GM12878 (cell line): ENCODE measurements at regions of chr6 and their contacts with region 1.

Region 1: DNA sequence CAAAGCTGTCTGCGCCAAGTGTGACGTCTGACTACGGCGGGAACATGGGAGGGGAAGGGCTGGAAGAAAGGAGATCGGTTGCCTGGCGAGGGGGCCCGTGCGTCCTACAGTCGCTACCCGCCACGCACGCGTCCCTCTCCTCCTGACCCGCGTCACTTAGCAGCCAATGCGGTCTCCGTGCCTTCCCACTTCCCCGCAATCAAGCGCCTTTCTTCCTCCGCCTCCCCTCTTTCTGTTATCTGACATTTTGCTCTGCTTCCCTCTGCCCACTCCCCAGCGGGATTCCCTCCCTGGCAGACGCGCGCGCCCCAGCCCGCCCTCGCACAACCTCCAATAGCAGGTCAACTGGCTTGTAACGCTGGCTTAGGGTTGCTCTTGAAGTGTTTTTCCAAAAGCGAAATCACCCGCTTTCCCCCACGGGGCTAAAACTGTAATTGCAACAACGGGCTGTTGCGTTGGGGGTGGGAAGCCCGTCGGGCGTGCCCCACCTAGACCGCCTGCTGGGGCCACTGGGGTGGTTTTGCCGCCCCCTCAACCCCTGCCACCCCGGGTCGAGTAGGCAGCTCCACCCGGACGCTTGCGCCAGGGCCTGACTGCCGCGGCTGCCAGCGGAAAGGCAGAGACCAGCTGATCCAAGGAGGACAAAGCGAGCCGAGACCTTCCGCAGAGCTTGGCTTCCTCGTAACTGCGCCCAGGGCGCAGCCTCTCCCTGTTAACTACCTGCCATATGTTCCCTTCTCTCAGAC is 6.2 kb upstream of the SOX4 start:
- DNase-seq: no peak
- ATAC-seq: peak; percentile 62
- H3K4me3 ChIP-seq: peak overlapping the region; percentile 79
- H3K27ac ChIP-seq: peak overlapping the region; percentile 77
- H3K4me1 ChIP-seq: peaks cover 4% of the 10 kb centered on the region; the same call in 1 of the 2 replicates
- H3K27me3 ChIP-seq: no peaks in the 10 kb centered on the region
- CTCF ChIP-seq: peak; percentile 5 to 30 (median 19); a peak in 2 of 6 replicates
- EP300 ChIP-seq: no peak
- POLR2A ChIP-seq: no peak
- RAD21 ChIP-seq: peak; percentile 45

Region 2: DNA sequence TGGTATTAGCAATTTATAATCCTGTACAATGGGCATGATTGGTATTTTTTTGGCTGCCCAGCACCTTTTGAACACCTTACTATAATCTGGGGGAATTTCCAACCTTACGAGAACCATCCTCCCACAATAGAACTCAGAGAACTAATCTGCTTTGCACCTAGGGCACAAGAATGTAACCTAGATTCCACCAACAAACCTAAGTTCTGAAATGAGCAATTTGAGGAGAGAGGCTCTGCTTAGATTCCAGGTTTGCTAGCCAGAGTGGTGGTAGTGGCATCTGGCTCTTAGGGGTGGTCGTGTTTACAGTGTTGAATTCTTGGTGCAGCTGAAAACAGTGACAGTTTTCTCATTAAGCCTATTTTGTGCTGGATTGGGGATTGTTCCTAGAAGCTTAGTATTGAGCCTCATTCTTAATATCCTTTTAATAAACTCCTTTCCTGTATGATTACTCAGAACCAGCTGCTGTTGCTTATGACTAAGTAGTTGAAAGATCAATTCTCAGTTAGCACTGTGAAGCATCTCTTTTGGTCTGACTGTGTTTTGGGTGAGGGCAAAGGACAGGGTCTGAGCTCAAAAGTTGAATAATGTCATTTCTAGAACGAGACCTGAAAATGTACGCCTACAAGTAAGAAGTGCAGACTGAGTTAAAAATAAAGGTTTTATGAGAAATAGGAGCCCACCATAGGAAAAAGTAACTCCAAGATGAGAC is 667.5 kb before region 1 on chr6:
- CTCF ChIA-PET with region 1: no interaction called
- POLR2A ChIA-PET with region 1: interaction called, 10 read pairs
- RAD21 ChIA-PET with region 1: no interaction called
- SMC1A ChIA-PET with region 1: no interaction called
- in situ Hi-C with region 1: no loop called
- intact Hi-C with region 1: no loop called
- DNase-seq: peak; percentile 59
- ATAC-seq: peak; percentile 81
- H3K4me3 ChIP-seq: no peak overlapping the region
- H3K27ac ChIP-seq: peak overlapping the region; percentile 77
- H3K4me1 ChIP-seq: peaks cover 17% of the 10 kb centered on the region
- H3K27me3 ChIP-seq: no peaks in the 10 kb centered on the region
- CTCF ChIP-seq: no peak
- EP300 ChIP-seq: peak; percentile 37 to 46; a peak in 2 of 4 replicates
- POLR2A ChIP-seq: no peak
- RAD21 ChIP-seq: no peak

Region 3: GRCh38 chr6:21111093-21111725 is 476.1 kb before region 1 on chr6:
- CTCF ChIA-PET with region 1: no interaction called
- POLR2A ChIA-PET with region 1: interaction called, 12 read pairs
- RAD21 ChIA-PET with region 1: no interaction called
- SMC1A ChIA-PET with region 1: no interaction called
- in situ Hi-C with region 1: no loop called
- intact Hi-C with region 1: no loop called
- DNase-seq: no peak
- ATAC-seq: no peak
- H3K4me3 ChIP-seq: no peak overlapping the region
- H3K27ac ChIP-seq: no peak overlapping the region
- H3K4me1 ChIP-seq: no peaks in the 10 kb centered on the region
- H3K27me3 ChIP-seq: no peaks in the 10 kb centered on the region
- CTCF ChIP-seq: no peak
- EP300 ChIP-seq: no peak
- POLR2A ChIP-seq: no peak
- RAD21 ChIP-seq: no peak

Region 4: DNA sequence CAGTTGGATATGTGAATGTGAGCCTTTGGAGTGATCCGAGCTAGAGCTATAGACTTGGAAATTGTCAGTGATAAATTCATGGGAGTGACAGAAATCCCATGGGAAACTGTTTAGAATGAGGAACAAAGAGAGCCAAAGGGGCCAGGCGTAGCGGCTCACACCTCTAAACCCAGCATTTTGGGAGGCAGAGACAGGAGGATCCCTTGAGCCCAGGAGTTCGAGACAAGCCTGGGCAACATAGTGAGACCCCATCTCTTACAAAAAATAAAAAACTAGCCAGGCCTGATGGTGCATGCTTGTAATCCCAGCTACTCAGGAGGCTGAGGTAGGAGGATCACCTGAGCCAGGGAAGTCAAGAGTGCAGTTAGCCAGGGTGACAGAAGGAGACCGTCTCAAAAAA is 33.1 kb before region 1 on chr6:
- CTCF ChIA-PET with region 1: no interaction called
- POLR2A ChIA-PET with region 1: no interaction called
- RAD21 ChIA-PET with region 1: no interaction called
- SMC1A ChIA-PET with region 1: no interaction called
- in situ Hi-C with region 1: no loop called
- intact Hi-C with region 1: no loop called
- DNase-seq: no peak
- ATAC-seq: no peak
- H3K4me3 ChIP-seq: no peak overlapping the region
- H3K27ac ChIP-seq: no peak overlapping the region
- H3K4me1 ChIP-seq: no peaks in the 10 kb centered on the region
- H3K27me3 ChIP-seq: no peaks in the 10 kb centered on the region
- CTCF ChIP-seq: no peak
- EP300 ChIP-seq: no peak
- POLR2A ChIP-seq: no peak
- RAD21 ChIP-seq: no peak

Region 5: GRCh38 chr6:21909321-21909720 is 322.0 kb after region 1 on chr6:
- CTCF ChIA-PET with region 1: no interaction called
- POLR2A ChIA-PET with region 1: no interaction called
- RAD21 ChIA-PET with region 1: no interaction called
- SMC1A ChIA-PET with region 1: no interaction called
- in situ Hi-C with region 1: no loop called
- intact Hi-C with region 1: no loop called
- DNase-seq: no peak
- ATAC-seq: no peak
- H3K4me3 ChIP-seq: no peak overlapping the region
- H3K27ac ChIP-seq: no peak overlapping the region
- H3K4me1 ChIP-seq: no peaks in the 10 kb centered on the region
- H3K27me3 ChIP-seq: no peaks in the 10 kb centered on the region
- CTCF ChIP-seq: no peak
- EP300 ChIP-seq: no peak
- POLR2A ChIP-seq: no peak
- RAD21 ChIP-seq: no peak